Right ventricle myocardium inferior (tissue), 1 donor: ENCODE measurements at regions of chrX and their contacts with region 1.

Region 1: GRCh38 chrX:45322382-45322781 is 121.7 kb upstream of the DIPK2B start:
- DNase-seq: no peak
- ATAC-seq: no peak

Region 2: GRCh38 chrX:45232139-45232538 is 90.2 kb before region 1 on chrX:
- intact Hi-C with region 1: no loop called
- DNase-seq: no peak
- ATAC-seq: no peak

Region 3: GRCh38 chrX:45360571-45360970 is 38.2 kb after region 1 on chrX:
- intact Hi-C with region 1: no loop called
- DNase-seq: no peak
- ATAC-seq: no peak

Region 4: GRCh38 chrX:45505214-45505613 is 182.8 kb after region 1 on chrX:
- intact Hi-C with region 1: loop called (anchors 5 kb)
- DNase-seq: no peak
- ATAC-seq: no peak

Region 5: DNA sequence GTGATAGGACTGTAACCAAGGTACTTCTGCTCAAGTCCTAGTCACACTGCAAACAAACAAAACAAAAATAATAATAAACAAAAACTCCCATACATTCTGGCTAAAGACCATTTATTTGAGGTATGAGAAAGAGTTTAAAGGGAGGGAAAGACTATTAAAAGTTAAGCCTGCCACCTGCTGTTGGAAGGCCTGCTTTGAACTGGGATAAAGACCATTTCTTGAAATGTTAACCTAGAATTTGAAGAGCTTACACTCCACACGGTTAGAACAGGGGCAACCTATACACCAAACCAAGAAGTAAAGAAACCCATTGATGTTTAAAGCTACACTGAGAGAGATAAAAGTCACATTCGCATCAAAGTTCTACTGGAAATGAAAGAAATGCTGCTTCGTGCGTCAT is 427.0 kb after region 1 on chrX:
- intact Hi-C with region 1: loop called (anchors 5 kb)
- DNase-seq: no peak
- ATAC-seq: no peak

Region 6: DNA sequence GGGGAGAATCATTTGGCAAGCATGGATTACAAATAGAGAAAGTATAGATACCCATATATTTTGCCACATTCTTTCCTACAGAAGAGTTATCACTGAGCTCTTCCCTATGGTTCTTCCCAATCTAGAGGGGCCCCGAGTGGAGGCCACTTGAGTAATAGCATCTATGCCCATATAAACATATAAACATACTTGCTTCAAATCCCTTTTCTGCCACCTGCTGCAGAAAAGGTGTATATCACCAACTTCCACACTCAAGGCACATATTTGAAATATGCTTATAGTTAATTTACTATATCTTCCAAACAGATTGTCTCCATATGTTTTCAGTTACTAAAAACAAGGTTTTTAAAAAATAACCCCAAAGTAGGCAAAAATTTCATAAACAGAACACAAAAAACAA is 521.1 kb after region 1 on chrX:
- intact Hi-C with region 1: loop called (anchors 5 kb)
- DNase-seq: no peak
- ATAC-seq: no peak